Activated CD8-positive, alpha-beta T cell treated with anti-CD3 and anti-CD28 coated beads for 36 hours (primary cell): ENCODE measurements at regions of chr2 and their contacts with region 1.

Region 1: DNA sequence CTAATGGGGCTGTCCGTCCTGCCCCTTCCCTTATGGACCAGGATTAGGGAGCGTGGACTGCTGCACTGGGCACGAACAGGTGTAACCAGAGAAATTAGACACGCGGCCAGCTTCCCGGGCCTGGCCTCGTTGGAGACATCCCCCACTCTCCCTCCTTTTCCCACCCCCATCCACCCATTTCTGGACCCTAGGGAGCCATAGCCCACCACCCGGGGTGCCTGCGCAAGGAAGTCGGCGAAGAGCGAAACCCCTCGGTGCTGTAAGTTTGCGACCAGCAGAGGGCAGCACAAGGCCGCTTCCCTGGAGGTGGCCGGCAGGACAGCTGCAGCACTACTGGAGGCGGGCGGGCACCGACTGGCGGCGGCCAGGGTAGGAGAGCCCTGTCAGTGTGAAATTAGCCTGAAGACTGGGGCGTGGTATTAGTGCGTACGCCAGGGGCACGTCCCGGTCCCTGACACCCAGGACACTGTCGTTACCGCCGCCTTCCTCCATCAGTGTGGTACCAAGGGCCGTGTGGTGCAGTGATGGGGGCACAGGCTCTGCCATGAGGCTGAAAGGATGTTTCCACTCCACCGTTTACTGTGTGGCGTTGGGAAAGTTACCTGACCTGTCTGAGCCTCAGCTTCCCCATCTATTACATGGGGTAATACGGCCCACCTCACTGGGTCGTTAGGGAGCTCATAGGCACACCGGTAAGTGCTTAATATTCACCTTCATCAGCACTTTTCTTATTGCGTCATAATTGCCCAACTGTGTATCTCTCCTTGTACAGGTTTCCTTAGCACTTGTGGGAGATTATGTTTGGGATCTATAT is 36.0 kb upstream of the CD207 start:
- DNase-seq: peak; percentile 90
- ATAC-seq: peak; percentile 96
- H3K4me3 Mint-ChIP-seq: no peak overlapping the region
- H3K27ac Mint-ChIP-seq: no peak overlapping the region
- H3K4me1 Mint-ChIP-seq: no peaks in the 10 kb centered on the region
- H3K27me3 Mint-ChIP-seq: peaks cover 31% of the 10 kb centered on the region
- CTCF ChIP-seq: peak; percentile 93

Region 2: DNA sequence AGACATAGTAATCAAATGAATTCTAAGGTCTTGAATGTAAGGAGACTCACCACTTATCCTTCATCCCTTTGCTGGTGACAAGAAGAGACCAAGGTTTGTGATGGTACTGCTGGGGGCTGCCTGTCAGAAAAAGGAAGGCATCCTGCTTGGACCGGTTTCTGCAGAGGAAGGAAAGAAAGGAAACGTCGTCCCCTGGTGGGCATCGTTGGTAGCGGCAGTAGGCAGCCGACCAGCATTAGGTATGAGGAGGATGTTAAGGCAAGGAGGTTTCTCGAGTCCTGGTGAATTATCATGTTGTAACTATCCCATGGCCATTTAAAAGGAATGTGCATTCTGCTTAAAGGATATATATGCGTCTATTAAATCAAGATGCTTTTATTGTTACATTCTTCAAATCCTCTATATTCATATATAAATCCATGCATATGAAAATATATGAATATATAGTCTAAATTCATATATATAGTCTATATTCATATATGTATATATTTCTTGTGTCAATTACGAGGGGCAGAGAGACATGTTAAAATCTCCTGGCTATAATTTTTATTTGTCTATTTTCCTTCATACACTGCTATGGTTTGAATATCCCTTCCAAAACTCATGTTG is 223.6 kb before region 1 on chr2:
- CTCF ChIA-PET with region 1: no interaction called
- POLR2A ChIA-PET with region 1: no interaction called
- intact Hi-C with region 1: no loop called
- DNase-seq: peak; percentile 88
- ATAC-seq: peak; percentile 92
- H3K4me3 Mint-ChIP-seq: no peak overlapping the region
- H3K27ac Mint-ChIP-seq: no peak overlapping the region
- H3K4me1 Mint-ChIP-seq: no peaks in the 10 kb centered on the region
- H3K27me3 Mint-ChIP-seq: peaks cover 6% of the 10 kb centered on the region
- CTCF ChIP-seq: peak; percentile 96

Region 3: DNA sequence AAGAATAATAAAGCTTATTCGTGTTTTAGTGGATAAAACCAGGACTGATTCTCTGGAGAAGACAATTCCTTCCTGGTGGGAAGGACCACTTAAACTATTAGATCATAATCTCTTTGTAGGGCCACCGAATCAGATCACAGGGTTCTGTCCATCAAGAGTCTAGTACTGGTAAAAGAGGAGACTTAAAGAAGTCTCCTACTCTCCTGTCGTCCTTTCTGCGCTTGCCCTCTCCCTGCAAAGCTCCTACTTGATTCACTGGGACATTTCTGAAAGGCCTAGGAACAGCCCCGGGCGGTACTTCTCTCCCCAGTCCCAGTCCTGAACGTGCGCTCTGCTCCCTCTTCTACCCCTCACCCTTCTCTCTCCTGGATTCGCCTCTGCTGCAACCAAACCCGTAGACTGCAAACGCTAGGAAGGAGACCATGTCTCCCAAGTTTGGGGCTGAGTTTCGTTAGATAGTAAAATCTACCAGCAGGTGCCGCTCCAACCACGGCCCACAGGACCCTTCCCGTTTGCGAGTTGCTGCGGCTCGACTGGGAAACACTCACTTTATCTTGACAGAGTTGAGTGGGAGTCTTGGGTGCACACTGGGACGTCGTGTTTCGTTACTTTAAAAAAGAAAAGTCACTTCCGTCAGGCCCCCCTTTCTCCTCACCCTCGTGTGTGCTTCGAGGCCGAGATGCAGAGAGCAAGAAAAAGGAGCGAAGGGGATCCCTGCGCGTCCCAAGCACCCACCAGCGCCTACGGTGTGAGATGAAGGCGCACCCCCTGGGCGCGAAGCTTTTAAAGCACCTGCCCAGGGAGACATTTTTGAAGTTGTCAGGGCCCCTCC is 82.1 kb before region 1 on chr2:
- CTCF ChIA-PET with region 1: interaction called, 37 read pairs
- POLR2A ChIA-PET with region 1: no interaction called
- intact Hi-C with region 1: loop called (anchors 5 kb)
- DNase-seq: peak; percentile 87
- ATAC-seq: peak; percentile 80
- H3K4me3 Mint-ChIP-seq: peak overlapping the region; percentile 61
- H3K27ac Mint-ChIP-seq: no peak overlapping the region
- H3K4me1 Mint-ChIP-seq: peaks cover 14% of the 10 kb centered on the region
- H3K27me3 Mint-ChIP-seq: peaks cover 50% of the 10 kb centered on the region
- CTCF ChIP-seq: peak; percentile 83

Region 4: DNA sequence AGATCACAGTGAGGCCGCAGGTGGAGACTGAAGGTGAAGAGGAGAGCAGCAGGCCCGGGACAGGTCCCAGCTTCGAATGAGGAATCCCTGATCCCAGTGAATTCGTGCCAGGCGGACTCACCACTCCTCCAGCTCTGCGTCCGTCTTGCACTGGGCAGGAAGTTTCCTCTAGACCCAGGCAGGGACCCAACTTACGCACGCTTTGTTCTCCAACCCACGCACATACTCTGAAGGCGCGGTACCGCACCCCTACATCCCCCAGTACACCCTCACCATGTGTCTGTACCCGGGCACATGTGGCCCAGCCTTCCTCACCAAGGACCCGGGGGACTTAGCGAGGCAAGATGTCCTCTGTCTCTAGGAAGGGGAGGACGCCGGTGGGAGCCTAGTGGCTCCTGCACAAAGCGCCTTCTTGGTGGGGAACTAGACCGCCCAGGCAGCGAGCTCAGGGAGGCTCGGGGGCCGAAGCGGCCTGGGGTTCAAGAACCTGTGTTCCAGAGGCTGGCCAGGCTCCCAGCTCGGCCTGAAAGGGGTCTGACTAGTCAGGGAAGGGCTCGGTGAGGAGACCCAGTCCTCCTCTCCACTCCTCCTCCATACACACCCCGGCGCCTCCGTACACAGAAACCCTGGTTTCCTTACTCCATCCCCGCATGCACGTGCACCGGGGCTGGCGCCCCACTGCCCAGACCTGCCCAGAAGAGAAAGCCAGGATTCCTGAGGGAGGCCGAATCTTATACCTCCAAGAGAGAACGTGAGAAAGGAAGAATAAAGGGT is 25.8 kb after region 1 on chr2:
- CTCF ChIA-PET with region 1: interaction called, 14 read pairs
- POLR2A ChIA-PET with region 1: no interaction called
- intact Hi-C with region 1: no loop called
- DNase-seq: no peak
- ATAC-seq: peak; percentile 21
- H3K4me3 Mint-ChIP-seq: no peak overlapping the region
- H3K27ac Mint-ChIP-seq: no peak overlapping the region
- H3K4me1 Mint-ChIP-seq: peaks cover 14% of the 10 kb centered on the region
- H3K27me3 Mint-ChIP-seq: peaks cover 84% of the 10 kb centered on the region
- CTCF ChIP-seq: no peak

Region 5: DNA sequence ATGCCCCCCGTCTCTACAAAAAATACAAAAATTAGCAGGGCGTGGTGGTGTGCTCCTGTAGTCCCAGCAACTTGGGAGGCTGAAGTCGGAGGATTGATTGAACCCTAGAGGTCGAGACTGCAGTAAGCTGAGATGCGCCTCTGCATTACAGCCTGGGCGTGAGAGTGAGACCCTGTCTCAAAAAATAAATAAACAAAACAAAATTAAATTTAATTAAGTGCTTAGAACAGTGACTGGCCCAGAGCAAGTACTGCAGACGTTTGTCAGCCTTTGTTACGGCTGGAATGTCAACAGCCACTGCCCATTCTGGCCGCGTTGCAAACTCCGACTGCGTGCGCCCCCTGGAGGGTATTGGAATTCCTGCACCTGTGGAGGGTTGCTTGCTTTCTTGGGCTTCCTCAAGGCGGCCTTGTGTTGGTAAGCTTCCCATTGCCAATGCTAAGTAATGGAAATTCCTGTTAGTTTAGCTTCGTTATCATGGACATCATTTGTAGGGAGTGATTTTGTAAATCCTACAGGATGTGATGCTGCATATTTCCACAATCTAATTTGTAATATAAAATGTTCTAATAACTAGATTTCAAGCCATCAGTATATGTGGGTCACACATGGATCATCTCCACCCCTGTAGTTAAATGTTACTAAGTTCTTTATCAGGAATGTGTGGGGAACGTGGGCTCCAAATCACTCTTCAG is 48.2 kb after region 1 on chr2:
- CTCF ChIA-PET with region 1: interaction called, 135 read pairs
- POLR2A ChIA-PET with region 1: interaction called, 3 read pairs
- intact Hi-C with region 1: loop called (anchors 2 kb)
- DNase-seq: peak; percentile 84
- ATAC-seq: peak; percentile 90
- H3K4me3 Mint-ChIP-seq: no peak overlapping the region
- H3K27ac Mint-ChIP-seq: no peak overlapping the region
- H3K4me1 Mint-ChIP-seq: no peaks in the 10 kb centered on the region
- H3K27me3 Mint-ChIP-seq: peaks cover 17% of the 10 kb centered on the region
- CTCF ChIP-seq: peak; percentile 90

Region 6: DNA sequence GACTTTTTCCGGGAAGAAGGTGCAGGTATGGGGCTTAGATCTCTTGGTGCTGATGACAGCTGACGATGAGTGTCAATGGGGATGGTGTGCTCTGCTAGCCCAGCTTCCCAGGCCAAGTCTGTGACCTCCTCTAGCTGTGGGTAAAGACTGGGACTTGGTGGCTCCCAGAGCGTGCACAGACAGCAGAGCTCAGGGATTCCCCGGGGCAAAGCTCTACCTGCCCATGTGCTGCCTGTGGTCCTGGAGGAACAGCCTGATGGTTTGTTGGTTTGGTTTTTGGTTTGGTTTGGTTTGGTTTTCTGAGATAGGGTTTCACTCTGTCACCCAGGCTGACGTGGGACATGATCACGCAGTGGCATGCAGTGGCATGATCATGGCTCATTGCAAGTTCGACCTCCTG is 83.3 kb after region 1 on chr2:
- CTCF ChIA-PET with region 1: interaction called, 42 read pairs
- POLR2A ChIA-PET with region 1: no interaction called
- intact Hi-C with region 1: no loop called
- DNase-seq: no peak
- ATAC-seq: no peak
- H3K4me3 Mint-ChIP-seq: no peak overlapping the region
- H3K27ac Mint-ChIP-seq: no peak overlapping the region
- H3K4me1 Mint-ChIP-seq: peaks cover 4% of the 10 kb centered on the region
- H3K27me3 Mint-ChIP-seq: peaks cover 17% of the 10 kb centered on the region
- CTCF ChIP-seq: no peak

Region 7: DNA sequence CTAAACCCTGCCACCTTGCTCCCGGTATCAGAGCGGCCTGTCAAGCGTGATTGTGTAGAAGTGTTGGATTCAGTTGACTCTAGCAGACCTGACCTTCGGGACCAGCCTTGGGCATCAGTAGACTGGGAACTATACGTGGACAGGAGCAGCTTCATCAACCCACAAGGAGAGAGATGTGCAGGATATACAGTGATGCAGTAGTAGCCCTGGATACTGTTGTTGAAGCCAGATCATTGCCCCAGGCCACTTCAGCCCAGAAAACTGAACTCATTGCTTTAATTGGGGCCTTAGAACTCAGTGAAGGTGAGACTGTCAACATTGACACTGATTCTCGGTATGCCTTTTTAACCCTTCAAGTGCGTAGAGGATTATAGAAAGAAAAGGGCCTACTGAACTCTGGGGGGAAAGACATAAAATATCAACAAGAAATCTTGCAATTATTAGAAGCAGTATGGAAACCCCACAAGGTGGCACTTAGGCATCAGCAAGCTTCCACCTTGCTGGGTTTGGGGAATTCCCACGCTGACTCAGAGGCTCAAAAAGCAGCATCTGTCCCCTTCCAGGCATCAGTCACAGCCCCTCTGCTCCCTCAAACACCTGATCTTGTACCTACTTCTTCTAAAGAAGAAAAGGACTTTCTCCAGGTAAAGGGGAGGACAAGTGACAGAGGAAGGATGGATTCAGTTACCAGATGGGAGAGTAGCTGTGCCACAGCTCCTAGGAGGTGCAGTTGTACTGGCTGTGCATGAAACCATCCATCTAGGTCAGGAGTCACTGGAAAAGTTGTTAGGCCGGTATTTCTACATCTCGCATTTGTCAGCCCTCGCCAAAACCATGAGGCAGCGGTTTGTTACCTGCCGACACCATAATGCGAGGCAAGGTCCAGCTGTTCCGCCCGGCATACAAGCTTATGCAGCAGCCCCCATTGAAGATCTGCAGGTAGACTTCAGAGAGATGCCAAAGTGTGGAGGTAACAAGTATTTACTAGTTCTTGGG is 178.1 kb after region 1 on chr2:
- CTCF ChIA-PET with region 1: no interaction called
- POLR2A ChIA-PET with region 1: no interaction called
- intact Hi-C with region 1: no loop called
- DNase-seq: peak; percentile 82
- ATAC-seq: peak; percentile 89
- H3K4me3 Mint-ChIP-seq: no peak overlapping the region
- H3K27ac Mint-ChIP-seq: no peak overlapping the region
- H3K4me1 Mint-ChIP-seq: peaks cover 10% of the 10 kb centered on the region
- H3K27me3 Mint-ChIP-seq: no peaks in the 10 kb centered on the region
- CTCF ChIP-seq: peak; percentile 53